Activated CD4-positive, alpha-beta T cell treated with anti-CD3 and anti-CD28 coated beads for 36 hours (primary cell): ENCODE measurements at regions of chr5 and their contacts with region 1.

Region 1: DNA sequence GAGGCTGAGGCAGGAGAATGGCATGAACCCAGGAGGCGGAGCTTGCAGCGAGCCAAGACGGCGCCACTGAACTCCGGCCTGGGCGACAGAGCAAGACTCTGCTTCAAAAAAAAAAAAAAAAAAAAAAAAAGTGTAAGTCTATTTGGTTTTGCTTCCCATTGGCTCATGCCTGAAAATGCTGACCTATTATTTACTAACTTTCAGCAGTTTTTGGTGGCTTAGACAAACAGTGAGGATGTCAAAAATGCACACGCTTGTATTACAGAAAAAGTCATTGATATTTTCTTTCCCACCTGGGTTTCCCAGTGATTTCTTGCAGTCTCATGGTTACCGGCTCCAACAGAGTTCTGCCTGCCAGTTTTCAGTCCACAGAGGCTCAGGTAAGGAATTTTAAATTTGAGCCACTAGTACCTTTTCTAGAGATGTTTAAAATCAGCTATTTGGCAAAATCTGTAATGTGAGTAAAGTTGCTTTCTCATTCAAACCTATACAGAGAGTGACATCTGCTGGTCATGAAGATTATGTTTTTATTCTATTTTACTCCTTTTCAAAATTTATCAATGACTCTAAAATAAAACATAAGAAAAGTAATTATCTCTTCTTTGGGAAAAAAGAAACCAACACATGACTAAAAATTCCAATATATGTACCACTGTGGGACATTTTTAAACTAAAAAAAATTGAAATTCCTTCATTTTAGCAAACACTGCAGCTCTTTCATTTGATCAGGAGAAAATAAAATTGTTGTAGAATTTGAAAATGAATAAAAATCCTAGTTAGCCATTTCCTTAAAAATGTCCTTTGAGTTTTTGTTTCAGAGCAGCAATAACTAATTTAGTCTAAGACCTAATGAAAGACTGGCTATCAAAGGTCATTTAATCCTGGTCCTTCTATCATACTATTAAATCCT is 8.8 kb downstream of the FAM200C start:
- DNase-seq: no peak
- ATAC-seq: no peak
- H3K4me3 Mint-ChIP-seq: no peak overlapping the region
- H3K27ac Mint-ChIP-seq: no peak overlapping the region
- H3K4me1 Mint-ChIP-seq: no peaks in the 10 kb centered on the region
- H3K27me3 Mint-ChIP-seq: no peaks in the 10 kb centered on the region

Region 2: GRCh38 chr5:160082614-160083500 is 308.2 kb before region 1 on chr5:
- CTCF ChIA-PET with region 1: interaction called, 3 read pairs
- POLR2A ChIA-PET with region 1: no interaction called
- intact Hi-C with region 1: loop called in 1 of 2 experiments (anchors 2 kb)
- DNase-seq: no peak
- ATAC-seq: no peak
- H3K4me3 Mint-ChIP-seq: no peak overlapping the region
- H3K27ac Mint-ChIP-seq: no peak overlapping the region
- H3K4me1 Mint-ChIP-seq: no peaks in the 10 kb centered on the region
- H3K27me3 Mint-ChIP-seq: no peaks in the 10 kb centered on the region

Region 3: DNA sequence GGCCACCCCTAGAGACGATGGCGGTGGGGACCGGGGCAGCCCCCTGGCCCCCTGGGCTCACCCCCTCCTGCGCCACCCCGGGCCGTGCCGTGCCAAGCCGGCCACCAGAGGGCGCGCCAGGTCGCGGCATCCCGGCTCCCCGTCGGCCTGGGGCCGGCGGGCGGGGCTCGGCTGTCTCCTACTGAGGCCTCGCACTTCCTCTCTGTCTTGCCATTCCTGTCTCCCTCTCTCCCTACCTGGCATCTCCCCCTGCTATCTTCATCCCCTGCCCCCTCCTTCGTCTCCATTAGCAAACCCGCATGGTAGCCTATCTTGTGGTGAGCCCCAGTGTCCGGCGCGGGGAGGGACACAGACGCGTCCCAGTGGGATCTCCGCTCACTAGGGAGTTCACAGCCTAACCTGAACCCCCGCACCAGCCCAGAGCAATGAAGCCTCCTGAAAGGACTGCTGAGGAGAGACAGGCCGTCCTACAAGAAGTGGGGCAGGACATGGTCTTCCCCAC is 191.6 kb before region 1 on chr5:
- CTCF ChIA-PET with region 1: interaction called, 3 read pairs
- POLR2A ChIA-PET with region 1: no interaction called
- intact Hi-C with region 1: loop called (anchors 1 kb)
- DNase-seq: peak; percentile 88
- ATAC-seq: peak; percentile 99
- H3K4me3 Mint-ChIP-seq: peak overlapping the region; percentile 57
- H3K27ac Mint-ChIP-seq: no peak overlapping the region
- H3K4me1 Mint-ChIP-seq: peaks cover 9% of the 10 kb centered on the region
- H3K27me3 Mint-ChIP-seq: peaks cover 8% of the 10 kb centered on the region

Region 4: DNA sequence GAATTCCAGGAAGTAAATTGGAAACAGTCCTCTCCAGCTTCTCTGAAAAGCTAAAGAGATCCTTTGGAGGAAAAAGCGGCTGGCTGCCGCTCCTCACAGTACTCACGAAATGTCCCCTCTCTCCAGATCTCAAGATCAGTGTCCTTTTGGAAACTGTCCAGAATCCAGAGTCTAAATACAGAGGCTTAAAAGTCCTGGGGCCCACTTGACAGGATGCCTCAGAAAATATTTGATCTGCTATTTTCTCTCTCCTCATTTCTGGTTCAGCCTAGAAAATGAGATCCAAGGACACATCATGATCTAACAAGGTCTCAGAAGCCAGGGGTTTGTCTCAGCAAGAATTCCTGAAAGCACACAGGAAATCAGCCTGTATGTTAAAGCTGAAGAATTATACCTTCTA is 27.8 kb before region 1 on chr5:
- CTCF ChIA-PET with region 1: no interaction called
- POLR2A ChIA-PET with region 1: no interaction called
- intact Hi-C with region 1: no loop called
- DNase-seq: no peak
- ATAC-seq: no peak
- H3K4me3 Mint-ChIP-seq: no peak overlapping the region
- H3K27ac Mint-ChIP-seq: no peak overlapping the region
- H3K4me1 Mint-ChIP-seq: no peaks in the 10 kb centered on the region
- H3K27me3 Mint-ChIP-seq: peaks cover 19% of the 10 kb centered on the region

Region 5: GRCh38 chr5:160537940-160538339 is 146.9 kb after region 1 on chr5:
- CTCF ChIA-PET with region 1: no interaction called
- POLR2A ChIA-PET with region 1: no interaction called
- intact Hi-C with region 1: no loop called
- DNase-seq: peak; percentile 13
- ATAC-seq: no peak
- H3K4me3 Mint-ChIP-seq: no peak overlapping the region
- H3K27ac Mint-ChIP-seq: no peak overlapping the region
- H3K4me1 Mint-ChIP-seq: peaks cover 14% of the 10 kb centered on the region
- H3K27me3 Mint-ChIP-seq: peaks cover 3% of the 10 kb centered on the region